H1 (cell line): ENCODE measurements at regions of chr10 and their contacts with region 1.

Region 1: GRCh38 chr10:96319754-96320474 is 15.7 kb downstream of the DNTT start:
- DNase-seq: no peak
- H3K4me3 ChIP-seq: no peak overlapping the region
- H3K27ac ChIP-seq: no peak overlapping the region
- H3K4me1 ChIP-seq: peaks cover 0 to 6% (median 0%) of the 10 kb centered on the region in 4 experiments; a peak in 2 of 7 replicates
- H3K27me3 ChIP-seq: no peaks in the 10 kb centered on the region
- CTCF ChIP-seq: no peak
- EP300 ChIP-seq: no peak
- POLR2A ChIP-seq: no peak
- RAD21 ChIP-seq: no peak

Region 2: DNA sequence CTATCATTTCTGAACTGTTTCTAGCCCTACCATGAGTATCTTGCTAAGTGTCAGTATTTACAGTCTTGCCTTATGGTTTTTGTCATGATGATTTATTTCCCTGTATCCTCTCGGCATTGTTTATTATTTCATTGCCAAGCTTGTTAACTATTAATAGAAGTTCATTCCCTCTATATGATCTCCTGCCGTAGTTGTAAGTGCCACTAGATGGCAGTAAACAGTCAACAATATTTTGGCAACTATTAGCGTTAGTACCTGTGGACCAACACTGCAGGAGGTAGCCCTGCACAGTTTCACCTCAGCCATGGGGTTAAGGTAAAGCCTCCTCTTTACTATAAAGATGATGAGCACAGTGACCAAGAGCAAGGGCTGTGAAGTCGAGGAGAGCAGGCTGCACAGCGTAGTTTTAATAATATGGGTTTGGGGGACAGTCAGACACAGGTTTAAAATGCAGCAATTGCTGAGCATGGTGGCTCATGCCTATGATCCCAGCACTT is 302.7 kb before region 1 on chr10:
- CTCF ChIA-PET with region 1: interaction called, 17 read pairs
- POLR2A ChIA-PET with region 1: no interaction called
- DNase-seq: peak in 1 of 2 experiments; percentile 54
- H3K4me3 ChIP-seq: no peak overlapping the region
- H3K27ac ChIP-seq: no peak overlapping the region
- H3K4me1 ChIP-seq: no peaks in the 10 kb centered on the region
- H3K27me3 ChIP-seq: no peaks in the 10 kb centered on the region
- CTCF ChIP-seq: peak in 2 of 3 experiments; percentile 62 to 70; a peak in 3 of 4 replicates
- EP300 ChIP-seq: no peak
- POLR2A ChIP-seq: no peak
- RAD21 ChIP-seq: peak; percentile 83 to 86

Region 3: GRCh38 chr10:96236090-96236478 is 83.8 kb before region 1 on chr10:
- CTCF ChIA-PET with region 1: interaction called, 119 read pairs
- POLR2A ChIA-PET with region 1: no interaction called
- DNase-seq: no peak
- H3K4me3 ChIP-seq: no peak overlapping the region
- H3K27ac ChIP-seq: no peak overlapping the region
- H3K4me1 ChIP-seq: no peaks in the 10 kb centered on the region
- H3K27me3 ChIP-seq: no peaks in the 10 kb centered on the region
- CTCF ChIP-seq: no peak
- EP300 ChIP-seq: no peak
- POLR2A ChIP-seq: no peak
- RAD21 ChIP-seq: no peak

Region 4: DNA sequence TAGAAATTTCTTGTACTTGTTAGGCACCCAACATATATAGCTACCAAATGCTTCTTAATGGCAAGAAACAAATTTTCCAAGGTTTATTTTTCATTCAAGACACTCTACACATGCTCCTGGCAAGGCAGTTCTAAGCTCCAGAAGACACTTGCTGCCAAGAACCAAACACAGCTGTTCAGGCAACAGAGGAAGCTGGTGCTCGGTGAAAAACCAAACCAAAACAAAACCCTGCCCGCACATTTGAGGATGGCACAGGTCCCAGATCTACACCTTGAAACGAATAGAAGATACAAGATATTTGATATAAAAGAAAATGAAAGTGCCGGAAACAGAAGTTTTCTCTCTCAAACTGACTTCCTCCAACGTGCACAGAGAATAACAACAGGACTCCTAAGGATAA is 20.5 kb before region 1 on chr10:
- CTCF ChIA-PET with region 1: interaction called, 25 read pairs
- POLR2A ChIA-PET with region 1: no interaction called
- DNase-seq: no peak
- H3K4me3 ChIP-seq: no peak overlapping the region
- H3K27ac ChIP-seq: no peak overlapping the region
- H3K4me1 ChIP-seq: no peaks in the 10 kb centered on the region
- H3K27me3 ChIP-seq: no peaks in the 10 kb centered on the region; a peak in 2 of 7 replicates
- CTCF ChIP-seq: no peak
- EP300 ChIP-seq: no peak
- POLR2A ChIP-seq: no peak
- RAD21 ChIP-seq: no peak

Region 5: GRCh38 chr10:96306516-96306915 is 13.4 kb before region 1 on chr10:
- CTCF ChIA-PET with region 1: interaction called, 25 read pairs
- POLR2A ChIA-PET with region 1: interaction called, 9 read pairs
- DNase-seq: no peak
- H3K4me3 ChIP-seq: no peak overlapping the region
- H3K27ac ChIP-seq: no peak overlapping the region
- H3K4me1 ChIP-seq: peaks cover 3 to 24% (median 22%) of the 10 kb centered on the region in 4 experiments
- H3K27me3 ChIP-seq: no peaks in the 10 kb centered on the region
- CTCF ChIP-seq: no peak
- EP300 ChIP-seq: no peak
- POLR2A ChIP-seq: no peak
- RAD21 ChIP-seq: no peak

Region 6: DNA sequence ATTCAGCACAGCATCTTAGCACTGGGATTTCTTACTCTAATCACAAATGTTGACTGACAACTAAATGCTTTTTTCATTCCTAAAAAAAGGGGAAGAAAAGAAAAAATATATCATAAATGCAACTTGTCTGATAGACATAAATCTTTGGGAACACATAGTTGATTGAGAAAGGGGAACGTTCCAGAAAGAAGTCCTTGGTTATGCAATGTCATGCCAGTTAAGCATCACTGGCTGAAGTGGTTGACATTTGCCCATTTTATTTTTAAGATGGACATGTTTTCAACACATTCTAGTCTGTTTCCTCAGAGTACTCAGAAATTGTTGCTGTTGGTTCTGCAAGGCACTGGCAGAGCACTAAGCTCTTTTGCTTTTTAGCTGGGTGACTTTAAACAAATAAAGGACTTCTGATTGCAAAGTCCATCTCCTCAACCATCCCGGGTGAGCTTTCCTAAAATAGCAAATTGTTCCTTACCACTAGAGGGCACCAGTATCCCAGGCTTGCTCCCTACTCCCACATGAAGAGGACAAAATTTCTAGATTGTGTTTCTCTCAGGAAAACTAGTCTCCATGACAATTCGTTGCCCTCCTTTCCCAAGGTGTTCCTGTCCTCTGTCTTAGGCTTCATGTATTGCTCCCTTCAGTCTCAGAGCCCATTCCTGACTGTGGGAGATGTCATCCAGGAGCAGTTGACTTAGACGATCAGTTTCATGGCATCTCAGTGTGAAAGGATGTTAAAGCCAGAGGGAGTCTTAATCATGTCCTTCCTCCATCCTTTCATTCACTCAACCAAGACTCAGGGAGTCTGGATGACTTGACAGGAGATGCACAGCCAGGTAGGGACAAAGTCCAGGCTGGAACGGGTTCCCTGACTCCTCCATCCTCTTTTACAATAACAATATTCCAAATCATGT is 15.0 kb after region 1 on chr10:
- CTCF ChIA-PET with region 1: interaction called, 47 read pairs
- POLR2A ChIA-PET with region 1: no interaction called
- DNase-seq: peak in 1 of 2 experiments; percentile 50
- H3K4me3 ChIP-seq: no peak overlapping the region
- H3K27ac ChIP-seq: no peak overlapping the region
- H3K4me1 ChIP-seq: peaks cover 0 to 2% (median 1%) of the 10 kb centered on the region in 4 experiments; a peak in 1 of 7 replicates
- H3K27me3 ChIP-seq: 0 out of 7 replicates have a peak, but pooled peaks cover 0 to 1% (median 0%) of the 10 kb centered on the region in 4 experiments
- CTCF ChIP-seq: peak in 2 of 3 experiments; percentile 80 to 85; a peak in 3 of 4 replicates
- EP300 ChIP-seq: no peak; a peak in 1 of 3 replicates
- POLR2A ChIP-seq: no peak
- RAD21 ChIP-seq: peak; percentile 79 to 85

Region 7: GRCh38 chr10:96339957-96340904 is 20.3 kb after region 1 on chr10:
- CTCF ChIA-PET with region 1: interaction called, 47 read pairs
- POLR2A ChIA-PET with region 1: no interaction called
- DNase-seq: peak in 1 of 2 experiments; percentile 74
- H3K4me3 ChIP-seq: no peak overlapping the region
- H3K27ac ChIP-seq: no peak overlapping the region
- H3K4me1 ChIP-seq: peaks cover 0 to 14% (median 10%) of the 10 kb centered on the region in 4 experiments; a peak in 6 of 7 replicates
- H3K27me3 ChIP-seq: peaks cover 0 to 1% (median 0%) of the 10 kb centered on the region in 4 experiments; a peak in 1 of 7 replicates
- CTCF ChIP-seq: peak; percentile 71 to 80 (median 80)
- EP300 ChIP-seq: no peak
- POLR2A ChIP-seq: no peak
- RAD21 ChIP-seq: peak; percentile 70 to 75

Region 8: GRCh38 chr10:96651998-96652431 is 332.1 kb after region 1 on chr10:
- CTCF ChIA-PET with region 1: no interaction called
- POLR2A ChIA-PET with region 1: no interaction called
- DNase-seq: no peak
- H3K4me3 ChIP-seq: no peak overlapping the region
- H3K27ac ChIP-seq: no peak overlapping the region
- H3K4me1 ChIP-seq: no peaks in the 10 kb centered on the region
- H3K27me3 ChIP-seq: no peaks in the 10 kb centered on the region
- CTCF ChIP-seq: no peak
- EP300 ChIP-seq: no peak
- POLR2A ChIP-seq: no peak
- RAD21 ChIP-seq: no peak